GM18951 (cell line): ENCODE measurements at regions of chr6 and their contacts with region 1.

Region 1: GRCh38 chr6:25942561-25943147 is 12.2 kb upstream of the SLC17A2 start:
- POLR2A ChIP-seq: no peak

Region 2: DNA sequence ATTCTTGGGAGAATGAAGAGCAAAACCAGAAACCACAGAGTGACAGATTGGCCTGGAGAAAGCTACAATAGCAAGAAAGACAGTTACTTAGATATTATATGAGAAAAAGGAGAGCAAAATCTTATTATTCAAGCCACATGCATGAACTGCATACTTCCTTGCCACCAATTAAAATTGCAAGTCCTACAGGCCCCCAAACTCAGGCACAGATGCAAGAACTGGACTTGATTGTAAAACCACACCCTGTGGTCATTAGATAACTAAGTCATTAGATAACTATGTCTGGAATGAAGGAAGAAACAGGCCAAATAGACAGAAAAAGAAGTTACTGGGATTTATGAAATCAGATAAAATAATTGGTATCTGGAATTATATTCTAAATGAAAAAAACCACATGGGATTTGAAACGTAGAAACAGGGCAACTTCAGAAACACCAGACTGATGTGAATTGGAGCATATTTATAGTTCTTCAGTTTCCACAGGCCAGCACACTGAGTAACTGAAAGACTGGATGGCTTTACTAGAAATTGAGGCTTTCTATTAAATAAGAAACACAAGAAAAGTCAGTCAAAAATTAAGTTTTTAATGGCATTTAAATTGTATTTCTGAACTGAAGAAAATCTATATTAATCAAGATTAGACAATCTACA is 712.9 kb before region 1 on chr6:
- in situ Hi-C with region 1: loop called (anchors 25 kb)
- POLR2A ChIP-seq: no peak

Region 3: DNA sequence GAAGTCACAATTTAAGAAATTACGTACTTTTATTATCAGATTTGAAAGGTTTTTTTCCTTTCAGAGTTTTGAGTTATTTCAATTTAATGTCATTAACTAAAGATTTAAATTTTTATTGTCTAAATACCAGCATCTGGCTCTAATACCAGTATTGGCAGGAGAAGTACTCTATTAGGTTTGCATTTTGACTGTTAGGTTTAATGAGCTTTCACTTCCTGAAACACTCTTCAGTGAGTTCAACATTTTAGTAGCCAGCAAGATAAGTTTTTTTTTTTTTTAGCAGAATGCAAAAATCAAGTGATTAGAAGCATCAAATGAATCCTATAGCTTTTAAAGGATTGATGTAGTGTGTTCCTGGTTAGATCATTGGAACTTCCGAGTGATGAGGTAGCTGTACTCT is 324.7 kb before region 1 on chr6:
- in situ Hi-C with region 1: no loop called
- POLR2A ChIP-seq: no peak